ENCODE measurements at regions of chr2 and their contacts with region 1.

Region 1: DNA sequence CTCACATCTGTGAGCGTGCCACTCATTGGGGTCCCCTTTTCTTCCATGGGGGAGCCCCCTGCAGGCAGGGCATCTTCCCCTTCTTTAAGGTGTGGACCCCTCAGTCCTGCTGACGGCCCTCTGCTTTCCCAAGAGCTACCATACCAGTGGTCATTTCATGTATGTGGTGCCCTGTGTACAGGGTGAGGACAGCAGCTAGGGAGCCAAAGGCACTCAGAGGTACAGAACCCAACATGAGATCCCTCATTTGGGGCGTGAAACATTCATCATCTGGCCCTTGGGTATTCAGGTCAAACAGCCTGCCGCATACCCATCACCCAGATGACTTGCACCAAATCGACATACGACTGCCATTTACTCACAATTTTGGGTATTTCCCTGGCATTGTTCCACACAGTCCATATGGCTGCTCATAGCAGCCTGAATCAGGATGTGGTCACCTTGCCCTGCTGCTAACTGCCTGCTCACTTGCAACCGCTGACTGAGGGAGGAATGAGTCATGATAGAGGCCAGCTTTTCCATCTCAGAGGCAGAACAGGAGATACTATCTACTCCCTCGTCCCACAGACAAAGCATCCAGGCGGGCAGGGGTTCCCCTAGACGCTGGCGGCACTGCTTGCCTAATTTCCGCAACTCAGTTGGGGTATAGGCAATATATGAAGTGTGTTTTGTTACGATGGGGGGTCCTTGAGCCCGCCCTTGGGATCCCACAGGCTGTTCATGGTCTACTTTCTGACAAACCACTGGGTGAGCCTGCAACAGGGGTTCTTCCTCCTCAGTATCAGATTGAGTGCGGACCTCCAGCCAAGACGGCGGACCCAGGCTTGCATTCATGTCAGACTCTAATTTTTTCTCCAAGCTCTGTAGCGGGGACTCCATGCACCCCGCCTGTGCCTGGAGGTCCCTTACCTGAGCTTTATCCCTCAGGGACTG is 228.6 kb downstream of the SATB2 start:
- DNase-seq: peak; percentile 97
- ATAC-seq: peak; percentile 94
- H3K4me3 ChIP-seq: no peak overlapping the region
- H3K27ac ChIP-seq: no peak overlapping the region
- H3K4me1 ChIP-seq: no peaks in the 10 kb centered on the region; the same call in 1 of the 2 replicates
- H3K27me3 ChIP-seq: no peaks in the 10 kb centered on the region
- CTCF ChIP-seq: no peak
- POLR2A ChIP-seq: no peak
- RAD21 ChIP-seq: peak; percentile 12; the same call in 1 of the 2 replicates

Region 2: DNA sequence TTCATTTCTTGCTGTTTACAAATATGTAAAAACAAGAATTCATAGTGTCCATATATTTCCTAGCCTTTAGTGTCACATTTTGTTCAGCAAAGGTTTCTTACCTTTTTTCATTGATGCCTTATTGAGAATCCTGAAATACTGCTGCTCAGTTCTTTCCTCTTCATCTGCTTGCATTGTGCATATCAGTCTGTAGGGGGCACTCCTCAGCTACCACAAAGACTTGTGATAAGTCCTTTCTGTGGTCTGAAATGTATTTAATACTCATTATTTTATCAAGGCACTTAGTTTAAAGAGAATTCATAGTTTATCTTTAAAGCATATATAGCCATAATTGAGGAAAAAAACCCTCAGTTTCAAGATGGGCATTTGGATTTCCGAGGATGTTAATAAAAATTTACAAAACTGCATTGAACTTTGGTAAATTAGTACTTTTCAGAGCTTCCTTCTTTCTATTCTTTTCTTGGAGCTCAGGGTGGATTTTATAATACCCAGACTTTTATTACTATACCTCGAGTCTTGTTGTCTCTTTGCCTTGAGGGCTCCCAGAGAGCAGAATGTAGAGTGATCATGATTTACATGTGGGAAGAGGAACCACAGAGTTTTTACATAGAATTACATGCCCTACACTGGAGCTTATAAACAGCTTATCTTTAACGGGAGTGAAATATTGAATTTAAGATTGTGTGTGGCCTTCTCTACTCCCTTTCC is 854.6 kb before region 1 on chr2:
- CTCF ChIA-PET with region 1: no interaction called
- POLR2A ChIA-PET with region 1: no interaction called
- dilution Hi-C with region 1: no loop called
- in situ Hi-C with region 1: no loop called
- intact Hi-C with region 1: loop called (anchors 5 kb)
- DNase-seq: peak; percentile 70
- ATAC-seq: peak; percentile 79
- H3K4me3 ChIP-seq: no peak overlapping the region
- H3K27ac ChIP-seq: no peak overlapping the region
- H3K4me1 ChIP-seq: no peaks in the 10 kb centered on the region
- H3K27me3 ChIP-seq: no peaks in the 10 kb centered on the region
- CTCF ChIP-seq: peak; percentile 74
- POLR2A ChIP-seq: no peak
- RAD21 ChIP-seq: peak; percentile 75

Region 3: GRCh38 chr2:199382091-199382490 is 152.9 kb after region 1 on chr2:
- CTCF ChIA-PET with region 1: no interaction called
- POLR2A ChIA-PET with region 1: no interaction called
- dilution Hi-C with region 1: no loop called
- in situ Hi-C with region 1: no loop called
- intact Hi-C with region 1: no loop called
- DNase-seq: peak; percentile 10
- ATAC-seq: no peak
- H3K4me3 ChIP-seq: no peak overlapping the region
- H3K27ac ChIP-seq: no peak overlapping the region
- H3K4me1 ChIP-seq: no peaks in the 10 kb centered on the region
- H3K27me3 ChIP-seq: no peaks in the 10 kb centered on the region
- CTCF ChIP-seq: no peak
- POLR2A ChIP-seq: no peak
- RAD21 ChIP-seq: no peak